Colonic mucosa (tissue), 4 donors: ENCODE measurements at regions of chr3 and their contacts with region 1.

Region 1: GRCh38 chr3:185767002-185767688 is 57.7 kb downstream of the IGF2BP2 start:
- DNase-seq: peak; percentile 54
- H3K4me3 ChIP-seq: no peak overlapping the region
- H3K27ac ChIP-seq: peak overlapping the region; percentile 42
- H3K4me1 ChIP-seq: no peaks in the 10 kb centered on the region
- H3K27me3 ChIP-seq: no peaks in the 10 kb centered on the region
- CTCF ChIP-seq: no peak

Region 2: GRCh38 chr3:185659942-185660921 is 106.9 kb before region 1 on chr3:
- intact Hi-C with region 1: loop called (anchors 5 kb)
- DNase-seq: peak; percentile 77
- H3K4me3 ChIP-seq: no peak overlapping the region
- H3K27ac ChIP-seq: no peak overlapping the region
- H3K4me1 ChIP-seq: no peaks in the 10 kb centered on the region
- H3K27me3 ChIP-seq: no peaks in the 10 kb centered on the region
- CTCF ChIP-seq: peak; percentile 97

Region 3: DNA sequence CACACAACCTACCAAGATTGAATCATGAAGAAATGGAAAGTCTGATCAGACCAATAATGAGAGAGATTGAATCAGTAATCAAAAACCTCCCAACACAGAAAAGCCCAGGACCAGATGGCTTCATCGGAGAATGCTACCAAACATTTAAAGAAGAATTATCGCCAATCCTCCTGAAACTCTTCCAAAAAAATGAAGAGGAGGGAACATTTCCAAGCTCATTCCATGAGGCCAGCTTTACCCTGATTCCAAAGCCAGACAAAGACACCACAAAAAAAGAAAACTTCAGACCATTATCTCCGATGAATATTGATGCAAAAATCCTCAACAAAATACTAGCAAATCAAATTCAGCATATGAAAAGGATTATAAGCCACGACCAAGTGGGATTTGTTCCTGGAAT is 86.9 kb before region 1 on chr3:
- intact Hi-C with region 1: loop called (anchors 5 kb)
- DNase-seq: no peak
- H3K4me3 ChIP-seq: no peak overlapping the region
- H3K27ac ChIP-seq: no peak overlapping the region
- H3K4me1 ChIP-seq: no peaks in the 10 kb centered on the region
- H3K27me3 ChIP-seq: no peaks in the 10 kb centered on the region
- CTCF ChIP-seq: no peak

Region 4: DNA sequence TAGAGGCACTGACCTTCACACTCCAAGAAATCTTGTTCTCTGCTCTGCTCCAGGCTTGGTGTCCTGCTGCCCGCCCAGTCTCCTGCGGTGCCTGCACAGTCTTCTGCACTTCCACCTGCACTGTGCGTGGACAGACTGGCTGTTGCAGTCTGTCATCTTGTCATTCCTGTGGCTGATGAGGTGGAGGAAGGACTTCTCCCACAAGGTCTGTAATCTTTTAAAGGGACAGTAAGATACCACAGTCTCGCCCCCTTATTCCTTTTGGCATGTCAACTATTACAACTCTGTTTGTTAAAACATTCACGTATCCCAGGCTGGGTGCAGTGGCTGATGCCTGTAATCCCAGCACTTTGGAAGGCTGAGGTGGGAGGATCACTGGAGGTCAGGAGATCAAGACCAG is 111.8 kb after region 1 on chr3:
- intact Hi-C with region 1: no loop called
- DNase-seq: no peak
- H3K4me3 ChIP-seq: no peak overlapping the region
- H3K27ac ChIP-seq: no peak overlapping the region
- H3K4me1 ChIP-seq: no peaks in the 10 kb centered on the region
- H3K27me3 ChIP-seq: no peaks in the 10 kb centered on the region
- CTCF ChIP-seq: no peak